ENCODE measurements at regions of chr12 and their contacts with region 1.

Region 1: GRCh38 chr12:100234598-100235304 is 32.1 kb downstream of the DEPDC4 start:
- DNase-seq: no peak
- ATAC-seq: peak; percentile 83
- H3K4me3 ChIP-seq: no peak overlapping the region
- H3K27ac ChIP-seq: no peak overlapping the region
- H3K4me1 ChIP-seq: no peaks in the 10 kb centered on the region
- H3K27me3 ChIP-seq: no peaks in the 10 kb centered on the region

Region 2: GRCh38 chr12:100290016-100290415 is 55.3 kb after region 1 on chr12:
- intact Hi-C with region 1: no loop called
- DNase-seq: no peak
- ATAC-seq: no peak
- H3K4me3 ChIP-seq: no peak overlapping the region
- H3K27ac ChIP-seq: no peak overlapping the region
- H3K4me1 ChIP-seq: peaks cover 0 to 2% of the 10 kb centered on the region in 2 donors
- H3K27me3 ChIP-seq: no peaks in the 10 kb centered on the region

Region 3: GRCh38 chr12:100554608-100555077 is 319.9 kb after region 1 on chr12:
- intact Hi-C with region 1: loop called (anchors 2 to 10 kb)
- DNase-seq: no peak
- ATAC-seq: peak; percentile 79
- H3K4me3 ChIP-seq: no peak overlapping the region
- H3K27ac ChIP-seq: no peak overlapping the region
- H3K4me1 ChIP-seq: no peaks in the 10 kb centered on the region
- H3K27me3 ChIP-seq: no peaks in the 10 kb centered on the region

Region 4: GRCh38 chr12:100733817-100734593 is 499.3 kb after region 1 on chr12:
- intact Hi-C with region 1: loop called (anchors 5 to 10 kb)
- DNase-seq: no peak
- ATAC-seq: no peak
- H3K4me3 ChIP-seq: no peak overlapping the region
- H3K27ac ChIP-seq: no peak overlapping the region
- H3K4me1 ChIP-seq: no peaks in the 10 kb centered on the region
- H3K27me3 ChIP-seq: no peaks in the 10 kb centered on the region

Measured in aorta (tissue), 5 donors.